GM12878 (cell line): ENCODE measurements at regions of chr2 and their contacts with region 1.

Region 1: DNA sequence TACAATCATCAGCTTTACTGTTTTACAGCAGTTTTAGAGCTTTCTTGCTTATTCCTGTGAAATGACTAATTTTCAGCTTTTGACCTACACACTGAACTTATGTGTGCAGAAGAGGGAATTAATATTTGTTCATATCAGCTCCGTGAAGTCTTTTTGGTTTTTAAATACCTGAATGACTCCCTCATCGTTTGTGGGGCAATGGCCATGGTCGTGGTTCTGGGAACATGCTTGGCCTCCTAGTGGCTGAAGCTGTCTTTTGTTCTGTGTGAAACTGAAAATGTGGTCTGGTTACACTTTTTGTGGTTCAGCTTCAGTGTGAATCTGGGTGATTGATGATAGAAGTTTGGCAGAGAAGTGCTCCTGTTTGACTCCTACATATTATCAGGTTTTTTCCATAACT is 408.1 kb downstream of the THSD7B start:
- DNase-seq: peak; percentile 58
- ATAC-seq: peak; percentile 97
- H3K4me3 ChIP-seq: no peak overlapping the region
- H3K27ac ChIP-seq: no peak overlapping the region
- H3K4me1 ChIP-seq: no peaks in the 10 kb centered on the region; the same call in 1 of the 2 replicates
- H3K27me3 ChIP-seq: 0 out of 4 replicates have a peak, but pooled peaks cover 0 to 2% of the 10 kb centered on the region in 2 experiments
- CTCF ChIP-seq: peak; percentile 41 to 59 (median 45)
- EP300 ChIP-seq: peak; percentile 43 to 69; a peak in 2 of 4 replicates
- POLR2A ChIP-seq: no peak
- RAD21 ChIP-seq: peak; percentile 39

Region 2: DNA sequence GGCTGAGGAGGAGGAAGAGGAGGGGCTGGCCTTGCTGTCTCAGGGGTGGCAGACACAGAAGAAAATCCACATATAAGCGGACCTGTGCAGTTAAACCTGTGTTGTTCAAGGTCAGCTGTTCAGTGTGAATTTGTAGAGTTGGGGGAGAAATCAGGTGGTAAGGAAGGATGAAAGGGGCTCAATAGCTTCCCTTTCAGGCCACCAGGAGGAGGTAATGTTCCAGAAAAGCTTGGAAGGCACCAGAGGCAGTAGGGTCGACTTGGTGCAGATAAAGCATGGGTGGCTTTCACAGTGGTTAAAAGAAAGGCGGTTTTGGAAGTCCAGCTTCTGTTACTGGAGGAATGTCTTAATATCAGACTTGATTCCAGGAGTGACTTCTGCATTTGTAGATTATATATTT is 240.8 kb before region 1 on chr2:
- CTCF ChIA-PET with region 1: no interaction called
- POLR2A ChIA-PET with region 1: no interaction called
- RAD21 ChIA-PET with region 1: no interaction called
- SMC1A ChIA-PET with region 1: interaction called, 7 read pairs
- in situ Hi-C with region 1: no loop called
- intact Hi-C with region 1: loop called (anchors 5 kb)
- DNase-seq: no peak
- ATAC-seq: peak; percentile 80
- H3K4me3 ChIP-seq: no peak overlapping the region
- H3K27ac ChIP-seq: no peak overlapping the region
- H3K4me1 ChIP-seq: no peaks in the 10 kb centered on the region
- H3K27me3 ChIP-seq: no peaks in the 10 kb centered on the region
- CTCF ChIP-seq: peak; percentile 41 to 60 (median 51); a peak in 5 of 6 replicates
- EP300 ChIP-seq: no peak
- POLR2A ChIP-seq: no peak
- RAD21 ChIP-seq: peak; percentile 59

Region 3: DNA sequence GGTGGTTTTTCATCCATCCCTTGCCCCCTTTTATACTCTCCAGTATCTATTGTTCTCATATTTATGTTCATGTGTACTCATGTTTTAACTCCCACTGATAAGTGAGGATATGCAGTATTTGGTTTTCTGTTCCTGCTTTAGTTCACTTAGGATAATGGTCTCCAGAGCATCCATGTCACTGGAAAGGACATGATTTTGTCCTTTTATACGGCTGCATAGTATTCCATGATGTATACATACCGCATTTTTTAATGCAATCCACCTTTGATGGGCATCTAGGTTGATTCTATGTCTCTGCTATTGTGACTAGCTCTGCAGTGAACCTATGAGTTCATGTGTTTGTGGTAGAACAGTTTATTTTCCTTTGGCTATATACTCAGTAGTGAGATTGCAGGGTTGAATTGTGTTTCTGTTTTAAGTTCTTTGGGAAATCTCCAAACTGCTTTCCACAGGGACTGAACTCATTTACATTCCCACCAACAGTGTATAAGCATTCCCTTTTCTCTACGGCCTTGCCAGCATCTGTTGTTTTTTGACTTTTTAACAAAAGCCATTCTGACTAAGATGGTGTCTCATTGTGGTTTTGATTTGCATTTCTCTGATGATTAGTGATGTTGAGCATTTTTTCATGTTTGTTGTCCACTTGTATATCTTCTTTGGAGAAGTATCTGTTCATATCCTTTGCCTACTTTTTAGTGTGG is 12.1 kb after region 1 on chr2:
- CTCF ChIA-PET with region 1: interaction called, 5 read pairs
- POLR2A ChIA-PET with region 1: interaction called, 4 read pairs
- RAD21 ChIA-PET with region 1: interaction called, 3 read pairs
- SMC1A ChIA-PET with region 1: interaction called, 14 read pairs
- in situ Hi-C with region 1: no loop called
- intact Hi-C with region 1: no loop called
- DNase-seq: no peak
- ATAC-seq: peak; percentile 56
- H3K4me3 ChIP-seq: no peak overlapping the region
- H3K27ac ChIP-seq: no peak overlapping the region
- H3K4me1 ChIP-seq: no peaks in the 10 kb centered on the region
- H3K27me3 ChIP-seq: no peaks in the 10 kb centered on the region
- CTCF ChIP-seq: no peak
- EP300 ChIP-seq: no peak
- POLR2A ChIP-seq: no peak
- RAD21 ChIP-seq: no peak

Region 4: GRCh38 chr2:137208431-137208891 is 35.0 kb after region 1 on chr2:
- CTCF ChIA-PET with region 1: interaction called, 10 read pairs
- POLR2A ChIA-PET with region 1: interaction called, 3 read pairs
- RAD21 ChIA-PET with region 1: interaction called, 5 read pairs
- SMC1A ChIA-PET with region 1: interaction called, 10 read pairs
- in situ Hi-C with region 1: no loop called
- intact Hi-C with region 1: no loop called
- DNase-seq: no peak
- ATAC-seq: peak; percentile 25
- H3K4me3 ChIP-seq: no peak overlapping the region
- H3K27ac ChIP-seq: no peak overlapping the region
- H3K4me1 ChIP-seq: no peaks in the 10 kb centered on the region
- H3K27me3 ChIP-seq: no peaks in the 10 kb centered on the region
- CTCF ChIP-seq: no peak
- EP300 ChIP-seq: no peak
- POLR2A ChIP-seq: no peak
- RAD21 ChIP-seq: no peak

Region 5: DNA sequence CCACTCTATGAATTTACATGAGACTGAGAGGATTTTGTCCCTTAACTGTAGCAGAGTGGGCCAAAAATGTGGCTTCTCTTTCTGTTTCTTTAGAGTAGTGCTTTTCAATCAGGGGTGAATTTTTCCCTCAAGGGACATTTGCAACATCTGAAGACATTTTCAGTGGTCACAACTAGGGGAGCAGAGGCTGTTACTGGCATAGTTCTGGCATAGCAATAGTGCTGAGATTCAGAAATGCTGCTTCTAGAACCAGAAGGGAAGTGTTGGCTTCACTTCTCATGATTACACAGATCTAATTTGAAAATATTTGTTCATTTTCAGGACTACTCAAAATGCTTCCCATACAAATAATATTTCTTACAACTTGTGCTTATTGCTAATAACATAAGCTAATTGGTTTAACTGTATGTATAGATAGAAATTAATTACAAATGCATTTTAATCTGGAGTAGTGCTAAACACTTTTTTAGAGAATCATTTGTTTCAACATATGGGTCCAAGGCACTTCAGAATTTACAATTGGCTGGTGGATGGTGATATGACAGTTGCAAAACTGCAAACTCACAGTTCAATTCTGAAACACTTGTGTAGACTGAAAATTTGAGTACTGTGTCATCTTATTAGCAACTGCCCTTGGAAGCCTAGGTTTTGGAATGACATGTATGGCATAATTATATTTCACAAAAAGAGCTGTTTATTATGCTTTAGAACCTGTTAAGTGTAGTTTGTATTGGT is 118.5 kb after region 1 on chr2:
- CTCF ChIA-PET with region 1: interaction called, 3 read pairs
- POLR2A ChIA-PET with region 1: interaction called, 4 read pairs
- RAD21 ChIA-PET with region 1: interaction called, 3 read pairs
- SMC1A ChIA-PET with region 1: interaction called, 3 read pairs
- in situ Hi-C with region 1: no loop called
- intact Hi-C with region 1: loop called (anchors 5 kb)
- DNase-seq: no peak
- ATAC-seq: peak; percentile 67
- H3K4me3 ChIP-seq: no peak overlapping the region
- H3K27ac ChIP-seq: no peak overlapping the region
- H3K4me1 ChIP-seq: no peaks in the 10 kb centered on the region
- H3K27me3 ChIP-seq: no peaks in the 10 kb centered on the region
- CTCF ChIP-seq: no peak
- EP300 ChIP-seq: no peak
- POLR2A ChIP-seq: no peak
- RAD21 ChIP-seq: no peak

Region 6: GRCh38 chr2:137339051-137339450 is 165.6 kb after region 1 on chr2:
- CTCF ChIA-PET with region 1: no interaction called
- POLR2A ChIA-PET with region 1: no interaction called
- RAD21 ChIA-PET with region 1: no interaction called
- SMC1A ChIA-PET with region 1: no interaction called
- in situ Hi-C with region 1: no loop called
- intact Hi-C with region 1: no loop called
- DNase-seq: no peak
- ATAC-seq: no peak
- H3K4me3 ChIP-seq: no peak overlapping the region
- H3K27ac ChIP-seq: no peak overlapping the region
- H3K4me1 ChIP-seq: no peaks in the 10 kb centered on the region
- H3K27me3 ChIP-seq: no peaks in the 10 kb centered on the region
- CTCF ChIP-seq: no peak
- EP300 ChIP-seq: no peak
- POLR2A ChIP-seq: no peak
- RAD21 ChIP-seq: no peak